Mammary epithelial cell (primary cell): ENCODE measurements at regions of chr1 and their contacts with region 1.

Region 1: GRCh38 chr1:230957580-230957989 is 21.1 kb downstream of the TTC13 start:
- DNase-seq: no peak
- H3K4me3 ChIP-seq: no peak overlapping the region
- H3K27ac ChIP-seq: no peak overlapping the region
- H3K4me1 ChIP-seq: no peaks in the 10 kb centered on the region
- H3K27me3 ChIP-seq: no peaks in the 10 kb centered on the region
- CTCF ChIP-seq: no peak

Region 2: DNA sequence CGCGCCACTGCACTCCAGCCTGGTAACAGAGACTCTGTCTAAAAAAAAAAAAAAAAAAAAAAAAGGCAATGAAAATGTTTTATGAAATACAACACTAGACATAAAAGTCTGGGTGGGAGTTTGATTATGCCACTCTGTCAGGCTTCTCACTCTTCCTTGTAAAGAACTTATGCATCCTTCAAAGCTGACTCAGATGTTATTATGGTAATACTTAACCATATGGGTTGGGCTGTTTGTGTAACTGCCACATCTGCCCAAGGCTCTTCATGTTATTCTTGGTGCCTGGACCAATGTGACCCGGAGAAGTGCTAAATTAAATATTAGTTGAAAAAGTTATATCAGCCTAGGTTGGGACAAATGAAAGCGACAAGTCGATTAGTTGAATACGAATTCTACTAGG is 58.6 kb after region 1 on chr1:
- CTCF ChIA-PET with region 1: no interaction called
- dilution Hi-C with region 1: loop called (anchors 10 kb)
- in situ Hi-C with region 1: no loop called
- intact Hi-C with region 1: no loop called
- DNase-seq: peak; percentile 43
- H3K4me3 ChIP-seq: no peak overlapping the region
- H3K27ac ChIP-seq: peak overlapping the region; percentile 95
- H3K4me1 ChIP-seq: peaks cover 31% of the 10 kb centered on the region
- H3K27me3 ChIP-seq: no peaks in the 10 kb centered on the region
- CTCF ChIP-seq: no peak